K562 (cell line): ENCODE measurements at regions of chr2 and their contacts with region 1.

Region 1: DNA sequence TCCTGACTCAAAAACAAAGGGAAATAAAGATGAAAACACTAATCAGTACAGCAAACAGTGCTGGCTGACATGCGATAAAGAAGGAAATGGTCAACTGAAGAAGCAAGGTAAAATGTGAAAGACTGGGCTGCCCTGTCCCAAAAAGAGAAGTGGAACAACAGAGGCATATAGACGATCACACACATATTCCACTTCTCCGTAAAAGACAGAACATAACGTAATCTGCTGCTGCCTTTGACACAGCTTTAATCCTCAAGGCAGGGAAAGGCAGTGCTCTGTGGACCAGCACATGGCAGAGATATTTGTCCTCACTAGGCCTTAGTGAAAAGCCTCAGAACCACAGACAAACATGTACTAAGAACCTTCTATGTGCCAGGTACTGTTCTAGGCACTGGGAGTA is 24.3 kb upstream of the REL start:
- DNase-seq: no peak
- ATAC-seq: peak; percentile 9; the same call in 2 of the 3 replicates
- H3K4me3 ChIP-seq: no peak overlapping the region
- H3K27ac ChIP-seq: no peak overlapping the region
- H3K4me1 ChIP-seq: peaks cover 4 to 15% of the 10 kb centered on the region in 2 experiments; a peak in 4 of 5 replicates
- H3K27me3 ChIP-seq: no peaks in the 10 kb centered on the region
- CTCF ChIP-seq: no peak
- EP300 ChIP-seq: no peak
- POLR2A ChIP-seq: no peak
- RAD21 ChIP-seq: no peak

Region 2: DNA sequence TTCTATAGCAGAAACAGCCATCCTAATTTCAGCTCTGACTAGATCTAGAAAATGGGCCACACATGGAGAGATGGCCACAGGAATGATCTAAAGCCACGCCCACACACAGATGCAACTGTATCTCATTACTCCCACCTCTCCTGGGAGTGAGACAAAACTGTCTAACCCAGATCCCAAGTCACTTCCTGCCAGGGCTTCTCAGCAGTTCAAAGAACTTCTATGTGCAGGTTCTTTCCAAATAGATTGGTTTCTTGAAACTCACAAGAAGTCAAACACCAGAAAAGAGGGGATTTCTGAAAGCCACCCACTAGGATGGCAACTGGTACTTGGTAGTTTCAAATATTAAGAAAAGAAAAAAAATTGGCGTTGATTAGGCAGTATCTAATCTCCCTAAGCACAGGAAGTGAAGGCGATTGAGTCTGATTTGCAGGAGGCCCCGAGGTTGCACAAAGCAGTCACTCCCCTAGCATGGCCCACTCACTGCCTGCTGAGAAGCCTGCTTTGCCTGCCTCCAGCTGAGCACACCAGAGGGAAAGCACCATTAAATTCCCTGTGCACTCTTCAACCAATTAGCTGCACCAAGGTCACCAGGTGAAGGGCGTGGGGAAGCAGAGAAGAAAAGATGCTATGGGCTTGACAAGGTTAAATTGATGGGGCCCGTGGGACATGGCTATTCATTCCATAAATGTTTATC is 49.9 kb before region 1 on chr2:
- CTCF ChIA-PET with region 1: no interaction called
- POLR2A ChIA-PET with region 1: no interaction called
- in situ Hi-C with region 1: no loop called
- intact Hi-C with region 1: no loop called
- DNase-seq: peak; percentile 70 to 92 (median 79)
- ATAC-seq: peak; percentile 89
- H3K4me3 ChIP-seq: no peak overlapping the region
- H3K27ac ChIP-seq: peak overlapping the region; percentile 78
- H3K4me1 ChIP-seq: peaks cover 27 to 28% of the 10 kb centered on the region in 2 experiments
- H3K27me3 ChIP-seq: no peaks in the 10 kb centered on the region
- CTCF ChIP-seq: no peak
- EP300 ChIP-seq: peak; percentile 48
- POLR2A ChIP-seq: peak; percentile 57; the same call in 1 of the 2 replicates
- RAD21 ChIP-seq: peak in 1 of 2 experiments; percentile 2; a peak in 2 of 4 replicates

Region 3: GRCh38 chr2:60821587-60822302 is 35.3 kb before region 1 on chr2:
- CTCF ChIA-PET with region 1: no interaction called
- POLR2A ChIA-PET with region 1: interaction called, 3 read pairs
- in situ Hi-C with region 1: no loop called
- intact Hi-C with region 1: loop called (anchors 1 kb)
- DNase-seq: no peak
- ATAC-seq: no peak
- H3K4me3 ChIP-seq: no peak overlapping the region
- H3K27ac ChIP-seq: no peak overlapping the region
- H3K4me1 ChIP-seq: peaks cover 0 to 2% of the 10 kb centered on the region in 2 experiments; a peak in 2 of 5 replicates
- H3K27me3 ChIP-seq: peaks cover 4 to 6% of the 10 kb centered on the region in 2 experiments; a peak in 4 of 5 replicates
- CTCF ChIP-seq: no peak
- EP300 ChIP-seq: no peak
- POLR2A ChIP-seq: no peak
- RAD21 ChIP-seq: no peak